AG04450 (cell line): ENCODE measurements at regions of chr5 and their contacts with region 1.

Region 1: GRCh38 chr5:86880785-86881492 is 263.2 kb downstream of the COX7C start:
- DNase-seq: peak; percentile 69
- H3K4me3 ChIP-seq: no peak overlapping the region
- H3K27ac ChIP-seq: no peak overlapping the region
- H3K27me3 ChIP-seq: no peaks in the 10 kb centered on the region
- CTCF ChIP-seq: peak; percentile 96

Region 2: DNA sequence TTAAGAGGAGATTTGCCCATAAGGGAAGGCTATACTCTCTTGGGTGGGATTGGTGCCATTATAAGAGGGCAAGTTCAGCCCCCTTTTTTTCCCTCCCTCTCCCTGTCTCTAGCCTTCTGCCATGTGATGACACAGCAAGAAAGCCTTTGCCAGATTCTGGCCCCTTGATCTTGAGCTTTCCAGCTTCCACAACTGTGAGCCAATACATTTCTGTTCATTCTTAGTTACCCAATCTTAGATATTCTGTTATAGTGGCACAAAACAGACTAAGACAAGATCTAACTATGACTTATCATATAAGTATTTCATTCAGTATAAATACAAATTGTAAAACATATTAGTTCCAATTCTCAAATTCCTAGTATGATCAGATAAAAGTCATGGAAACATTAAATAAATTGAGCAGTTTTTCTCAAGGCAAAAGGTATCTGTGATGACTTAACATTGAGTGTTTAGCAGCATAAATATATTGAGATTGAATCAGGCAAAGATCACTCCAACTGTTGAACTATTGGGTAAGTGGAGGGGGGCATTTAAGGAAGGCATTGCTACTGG is 13.1 kb after region 1 on chr5:
- CTCF ChIA-PET with region 1: interaction called, 10 read pairs
- POLR2A ChIA-PET with region 1: no interaction called
- DNase-seq: no peak
- H3K4me3 ChIP-seq: no peak overlapping the region
- H3K27ac ChIP-seq: no peak overlapping the region
- H3K27me3 ChIP-seq: no peaks in the 10 kb centered on the region
- CTCF ChIP-seq: no peak

Region 3: GRCh38 chr5:86968301-86968753 is 87.4 kb after region 1 on chr5:
- CTCF ChIA-PET with region 1: interaction called, 239 read pairs
- POLR2A ChIA-PET with region 1: interaction called, 5 read pairs
- DNase-seq: peak; percentile 7
- H3K4me3 ChIP-seq: no peak overlapping the region; the same call in 1 of the 2 replicates
- H3K27ac ChIP-seq: no peak overlapping the region
- H3K27me3 ChIP-seq: no peaks in the 10 kb centered on the region
- CTCF ChIP-seq: peak; percentile 42

Region 4: DNA sequence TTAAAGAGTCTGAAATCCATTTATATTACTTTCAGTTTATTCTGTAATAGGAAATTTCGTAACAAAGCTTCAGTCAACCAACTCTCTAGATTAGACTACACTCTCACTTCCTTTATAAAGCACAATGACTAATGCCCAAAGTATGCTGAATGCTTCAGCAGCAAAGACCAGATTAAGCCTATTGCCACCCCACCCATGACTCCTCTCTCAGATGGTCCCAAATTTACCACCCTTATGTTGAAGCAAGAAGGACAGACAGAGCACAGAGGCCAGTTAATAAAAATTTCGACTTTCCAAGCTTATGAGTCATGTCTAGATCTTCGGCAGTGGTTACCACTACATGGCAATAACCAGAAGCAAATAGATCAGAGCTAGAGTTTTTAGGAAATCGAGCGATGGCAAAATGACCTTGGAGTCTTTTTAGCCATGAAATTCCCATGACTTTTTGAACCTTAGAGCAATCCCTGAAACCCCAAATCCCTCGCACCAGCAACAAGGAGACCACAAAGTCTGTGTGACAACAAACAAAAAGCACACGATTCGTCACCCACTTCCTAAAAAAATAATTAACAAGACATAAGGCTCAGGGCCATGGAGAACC is 99.0 kb after region 1 on chr5:
- CTCF ChIA-PET with region 1: interaction called, 13 read pairs
- POLR2A ChIA-PET with region 1: no interaction called
- DNase-seq: peak; percentile 10
- H3K4me3 ChIP-seq: no peak overlapping the region
- H3K27ac ChIP-seq: no peak overlapping the region
- H3K27me3 ChIP-seq: no peaks in the 10 kb centered on the region
- CTCF ChIP-seq: no peak

Region 5: DNA sequence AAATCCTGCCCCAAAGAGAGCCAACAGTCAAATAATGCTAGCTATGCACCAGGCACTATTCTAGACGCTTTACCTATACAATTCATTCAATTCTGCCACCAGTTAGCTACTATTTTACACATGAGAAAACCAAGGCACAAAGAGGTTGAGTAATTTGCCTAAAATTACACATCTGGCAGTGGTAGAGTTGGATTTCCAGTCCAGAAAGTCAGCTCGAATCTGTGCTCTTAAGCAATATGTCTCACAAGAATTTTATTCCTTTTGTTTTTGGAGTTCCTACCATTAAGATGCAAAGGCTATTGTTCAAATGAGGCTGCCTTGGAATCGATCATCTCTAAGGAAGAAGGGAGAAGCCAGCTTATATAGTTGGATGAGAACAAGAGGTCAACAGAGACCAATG is 129.8 kb after region 1 on chr5:
- CTCF ChIA-PET with region 1: interaction called, 75 read pairs
- POLR2A ChIA-PET with region 1: no interaction called
- DNase-seq: no peak
- H3K4me3 ChIP-seq: no peak overlapping the region
- H3K27ac ChIP-seq: no peak overlapping the region
- H3K27me3 ChIP-seq: no peaks in the 10 kb centered on the region
- CTCF ChIP-seq: no peak

Region 6: DNA sequence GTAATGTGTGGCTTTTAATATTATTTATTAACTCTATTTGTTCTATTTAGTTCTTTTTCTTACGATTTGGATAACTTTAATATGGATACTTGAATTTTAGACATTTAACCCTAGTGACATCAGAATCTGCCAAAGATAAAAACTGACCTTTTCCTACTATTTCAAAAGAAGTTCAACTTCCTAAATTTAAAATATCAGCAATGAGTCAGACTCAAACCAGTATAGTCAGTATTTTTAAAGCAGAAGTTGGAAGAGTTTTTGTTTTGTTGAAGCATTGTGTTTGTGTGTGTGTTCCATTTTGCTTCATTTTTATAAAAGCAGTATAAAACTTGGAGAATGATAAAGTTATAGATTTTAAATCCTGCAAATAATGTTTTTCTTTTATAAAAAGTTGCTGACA is 135.0 kb after region 1 on chr5:
- CTCF ChIA-PET with region 1: interaction called, 75 read pairs
- POLR2A ChIA-PET with region 1: no interaction called
- DNase-seq: no peak
- H3K4me3 ChIP-seq: no peak overlapping the region
- H3K27ac ChIP-seq: no peak overlapping the region
- H3K27me3 ChIP-seq: no peaks in the 10 kb centered on the region
- CTCF ChIP-seq: no peak